Naive thymus-derived CD4-positive, alpha-beta T cell (primary cell): ENCODE measurements at regions of chr12 and their contacts with region 1.

Region 1: GRCh38 chr12:44930972-44931600 is 55.0 kb upstream of the NELL2 start:
- DNase-seq: peak in 7 of 9 donors; percentile 46 to 72 (median 60)
- ATAC-seq: peak; percentile 63
- H3K4me3 ChIP-seq: no peak overlapping the region
- H3K4me3 Mint-ChIP-seq: no peak overlapping the region
- H3K27ac ChIP-seq: no peak overlapping the region
- H3K27ac Mint-ChIP-seq: no peak overlapping the region
- H3K4me1 ChIP-seq: no peaks in the 10 kb centered on the region
- H3K4me1 Mint-ChIP-seq: peaks cover 0 to 5% (median 0%) of the 10 kb centered on the region in 7 donors
- H3K27me3 ChIP-seq: no peaks in the 10 kb centered on the region
- H3K27me3 Mint-ChIP-seq: peaks cover 0 to 11% (median 4%) of the 10 kb centered on the region in 5 donors

Region 2: DNA sequence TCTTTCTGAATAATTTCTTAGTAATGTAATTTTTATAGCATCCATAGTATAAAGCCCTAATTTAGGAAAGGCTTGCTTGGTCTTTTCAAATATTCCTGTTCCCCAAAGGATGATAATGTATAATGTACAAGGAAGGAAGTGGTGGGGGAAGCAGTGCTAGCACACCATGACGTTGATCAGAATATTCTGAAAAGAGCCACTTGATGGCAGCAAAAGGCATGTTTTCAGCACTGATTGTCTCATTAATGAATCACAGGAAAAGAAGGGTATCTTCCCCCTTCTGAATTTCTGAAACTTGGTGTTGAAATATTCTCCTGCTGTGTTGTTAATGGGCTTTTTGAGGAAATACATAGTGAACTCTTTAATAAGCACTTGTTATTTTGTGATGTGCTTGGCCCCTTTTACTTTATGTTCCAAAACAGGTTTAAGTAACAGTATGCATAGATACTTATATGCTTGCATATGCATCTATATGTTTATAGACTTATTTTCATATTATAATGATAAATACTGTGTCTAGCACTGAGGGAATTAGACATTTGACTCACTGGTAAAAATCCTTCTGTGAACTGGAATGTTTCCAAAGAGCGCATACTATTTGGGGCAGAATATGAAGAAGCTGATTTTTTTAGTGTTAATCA is 973.2 kb before region 1 on chr12:
- CTCF ChIA-PET with region 1: no interaction called
- POLR2A ChIA-PET with region 1: no interaction called
- intact Hi-C with region 1: loop called (anchors 1 to 5 kb)
- DNase-seq: peak in 5 of 9 donors; percentile 5 to 22 (median 13)
- ATAC-seq: peak; percentile 68
- H3K4me3 ChIP-seq: no peak overlapping the region
- H3K4me3 Mint-ChIP-seq: no peak overlapping the region
- H3K27ac ChIP-seq: no peak overlapping the region
- H3K27ac Mint-ChIP-seq: no peak overlapping the region
- H3K4me1 ChIP-seq: no peaks in the 10 kb centered on the region
- H3K4me1 Mint-ChIP-seq: peaks cover 0 to 13% (median 5%) of the 10 kb centered on the region in 7 donors
- H3K27me3 ChIP-seq: no peaks in the 10 kb centered on the region
- H3K27me3 Mint-ChIP-seq: peaks cover 0 to 8% (median 0%) of the 10 kb centered on the region in 5 donors

Region 3: DNA sequence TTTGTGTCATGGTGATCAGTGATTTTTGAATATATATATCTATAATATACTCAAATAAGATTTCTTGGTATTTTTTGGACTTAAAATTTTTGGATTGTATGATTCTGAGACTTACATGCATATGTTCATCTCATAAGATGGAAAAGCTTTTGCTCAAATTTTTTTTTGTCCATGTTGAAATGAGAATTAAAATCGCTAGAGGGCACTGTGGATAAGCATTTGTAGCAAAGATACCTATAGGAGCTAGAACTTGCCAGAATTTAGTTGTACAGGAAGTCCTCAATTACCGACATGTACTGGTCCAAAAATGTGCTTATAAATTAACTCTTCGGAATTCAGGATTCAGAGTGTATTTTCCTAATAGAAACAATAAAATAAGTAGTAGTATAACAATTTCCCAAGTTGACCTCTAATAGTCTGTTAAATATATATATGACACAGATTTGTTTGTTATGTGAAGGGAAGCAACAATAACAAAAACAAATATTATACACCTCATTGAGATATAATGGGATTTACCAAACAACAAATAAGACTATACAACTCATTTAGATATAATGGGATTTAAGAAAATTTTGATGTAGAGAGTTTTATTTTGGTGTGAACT is 915.6 kb before region 1 on chr12:
- CTCF ChIA-PET with region 1: interaction called, 27 read pairs
- POLR2A ChIA-PET with region 1: no interaction called
- intact Hi-C with region 1: loop called in 1 of 2 experiments (anchors 1 kb)
- DNase-seq: peak in 7 of 9 donors; percentile 14 to 56 (median 40)
- ATAC-seq: peak; percentile 53
- H3K4me3 ChIP-seq: no peak overlapping the region
- H3K4me3 Mint-ChIP-seq: no peak overlapping the region
- H3K27ac ChIP-seq: no peak overlapping the region
- H3K27ac Mint-ChIP-seq: no peak overlapping the region
- H3K4me1 ChIP-seq: no peaks in the 10 kb centered on the region
- H3K4me1 Mint-ChIP-seq: peaks cover 0 to 3% (median 0%) of the 10 kb centered on the region in 7 donors
- H3K27me3 ChIP-seq: no peaks in the 10 kb centered on the region
- H3K27me3 Mint-ChIP-seq: peaks cover 0 to 3% (median 0%) of the 10 kb centered on the region in 5 donors

Region 4: DNA sequence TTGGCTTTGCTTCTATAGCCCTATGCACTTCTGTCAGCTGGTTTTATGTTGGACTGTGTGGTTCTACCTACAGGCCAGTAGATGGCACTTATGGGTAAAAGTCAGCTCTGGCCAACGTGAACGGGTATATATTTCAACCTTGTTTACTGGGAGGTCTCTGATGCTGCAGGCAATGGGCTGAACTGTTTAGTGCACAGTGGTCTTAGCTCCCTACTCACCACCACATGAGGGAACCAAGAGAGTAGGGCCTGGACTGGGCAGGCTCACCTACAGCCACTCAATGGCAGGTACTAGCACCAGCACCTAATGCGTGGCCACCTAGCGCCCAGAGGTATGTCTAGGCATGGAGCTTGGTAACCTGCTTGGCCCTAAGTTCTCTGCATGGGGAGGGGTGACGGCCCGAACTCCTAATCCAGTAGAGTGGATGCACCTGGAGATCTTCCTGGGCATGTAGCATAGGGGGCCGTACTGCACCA is 613.4 kb before region 1 on chr12:
- CTCF ChIA-PET with region 1: no interaction called
- POLR2A ChIA-PET with region 1: no interaction called
- intact Hi-C with region 1: loop called in 1 of 2 experiments (anchors 1 kb)
- DNase-seq: peak in 3 of 9 donors; percentile 1 to 9 (median 7)
- ATAC-seq: peak; percentile 29
- H3K4me3 ChIP-seq: no peak overlapping the region
- H3K4me3 Mint-ChIP-seq: no peak overlapping the region
- H3K27ac ChIP-seq: no peak overlapping the region
- H3K27ac Mint-ChIP-seq: no peak overlapping the region
- H3K4me1 ChIP-seq: no peaks in the 10 kb centered on the region
- H3K4me1 Mint-ChIP-seq: peaks cover 0 to 4% (median 0%) of the 10 kb centered on the region in 7 donors
- H3K27me3 ChIP-seq: no peaks in the 10 kb centered on the region
- H3K27me3 Mint-ChIP-seq: no peaks in the 10 kb centered on the region

Region 5: DNA sequence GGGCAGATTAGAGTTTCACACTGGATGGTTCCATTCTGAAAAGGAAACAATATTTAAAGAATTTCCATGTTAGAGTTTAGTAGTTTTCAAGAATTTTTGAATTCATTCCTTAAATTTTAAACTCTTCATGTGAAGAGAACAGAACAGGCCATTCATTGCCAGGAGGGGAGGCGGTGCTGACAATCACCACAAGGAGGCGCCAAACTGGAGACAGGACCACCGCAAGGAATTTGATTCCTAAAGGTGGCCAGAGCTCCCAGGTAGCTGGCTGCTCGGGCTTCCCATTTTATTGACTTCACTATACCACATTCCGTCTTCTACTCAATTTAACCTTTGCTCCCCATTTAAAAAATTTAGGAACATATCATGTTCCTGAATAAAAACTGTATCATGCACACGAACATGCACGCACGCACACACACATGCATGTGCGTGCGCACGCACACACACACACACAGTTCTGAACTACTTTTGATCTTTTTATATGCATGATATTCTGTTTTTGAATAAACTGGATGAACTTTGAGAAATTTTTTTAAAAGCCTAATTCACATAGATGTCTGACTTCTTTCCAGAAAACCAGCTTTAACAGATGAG is 156.2 kb before region 1 on chr12:
- CTCF ChIA-PET with region 1: interaction called, 11 read pairs
- POLR2A ChIA-PET with region 1: no interaction called
- intact Hi-C with region 1: loop called (anchors 1 kb)
- DNase-seq: peak; percentile 12 to 61 (median 47)
- ATAC-seq: peak; percentile 57
- H3K4me3 ChIP-seq: no peak overlapping the region
- H3K4me3 Mint-ChIP-seq: peak overlapping the region in 1 of 10 donors; percentile 64
- H3K27ac ChIP-seq: no peak overlapping the region
- H3K27ac Mint-ChIP-seq: peak overlapping the region in 2 of 9 donors; percentile 54 to 85
- H3K4me1 ChIP-seq: no peaks in the 10 kb centered on the region
- H3K4me1 Mint-ChIP-seq: peaks cover 0 to 9% (median 4%) of the 10 kb centered on the region in 7 donors
- H3K27me3 ChIP-seq: no peaks in the 10 kb centered on the region
- H3K27me3 Mint-ChIP-seq: peaks cover 0 to 3% (median 0%) of the 10 kb centered on the region in 5 donors

Region 6: GRCh38 chr12:44812062-44812461 is 119.0 kb before region 1 on chr12:
- CTCF ChIA-PET with region 1: interaction called, 6 read pairs
- POLR2A ChIA-PET with region 1: no interaction called
- intact Hi-C with region 1: loop called (anchors 1 kb)
- DNase-seq: peak in 7 of 9 donors; percentile 42 to 65 (median 60)
- ATAC-seq: peak; percentile 79
- H3K4me3 ChIP-seq: no peak overlapping the region
- H3K4me3 Mint-ChIP-seq: peak overlapping the region in 3 of 10 donors; percentile 14 to 38 (median 34)
- H3K27ac ChIP-seq: no peak overlapping the region
- H3K27ac Mint-ChIP-seq: peak overlapping the region in 6 of 9 donors; percentile 21 to 77 (median 41)
- H3K4me1 ChIP-seq: peaks cover 14 to 15% of the 10 kb centered on the region in 2 donors
- H3K4me1 Mint-ChIP-seq: peaks cover 8 to 50% (median 38%) of the 10 kb centered on the region in 7 donors
- H3K27me3 ChIP-seq: no peaks in the 10 kb centered on the region
- H3K27me3 Mint-ChIP-seq: no peaks in the 10 kb centered on the region